Caco-2 (cell line): ENCODE measurements at regions of chr20 and their contacts with region 1.

Region 1: GRCh38 chr20:62524505-62524911 is 48.7 kb upstream of the GATA5 start:
- DNase-seq: no peak
- H3K4me3 ChIP-seq: no peak overlapping the region
- H3K4me3 Mint-ChIP-seq: no peak overlapping the region
- H3K27ac Mint-ChIP-seq: no peak overlapping the region
- H3K4me1 ChIP-seq: peaks cover 22% of the 10 kb centered on the region
- H3K4me1 Mint-ChIP-seq: peaks cover 13% of the 10 kb centered on the region
- H3K27me3 ChIP-seq: no peaks in the 10 kb centered on the region
- H3K27me3 Mint-ChIP-seq: no peaks in the 10 kb centered on the region
- CTCF ChIP-seq: no peak

Region 2: DNA sequence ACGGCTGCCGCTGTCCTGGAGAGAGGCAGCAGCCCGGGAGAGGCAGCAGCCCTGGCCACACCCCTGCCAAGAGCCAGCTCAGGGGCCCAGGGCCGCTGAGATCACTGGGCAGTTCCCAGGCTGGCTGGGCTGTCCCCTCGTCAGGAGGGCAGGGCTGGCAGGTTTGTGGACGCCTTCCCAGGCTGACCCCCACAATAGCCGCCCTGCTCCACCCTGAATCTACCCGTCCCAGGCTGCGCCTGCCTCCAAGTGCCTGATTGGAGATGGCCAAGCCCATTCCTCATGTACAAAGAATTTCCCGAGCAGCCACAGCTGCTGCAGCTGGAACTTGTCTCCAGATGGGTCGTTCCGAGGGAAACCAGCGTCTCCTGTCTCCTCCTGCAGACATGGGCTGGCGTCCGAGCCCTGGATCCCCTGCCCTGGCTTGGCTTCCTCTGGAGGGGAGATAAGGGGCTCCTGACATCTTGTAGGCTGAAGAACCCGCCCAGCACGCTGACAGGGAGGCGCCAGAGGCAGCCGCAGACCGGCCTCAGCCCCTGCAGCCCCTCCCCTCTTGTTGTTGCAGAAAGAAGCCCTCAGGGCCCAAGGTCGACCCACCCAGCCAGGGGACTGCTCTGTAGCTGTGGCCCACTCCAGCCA is 39.3 kb before region 1 on chr20:
- CTCF ChIA-PET with region 1: no interaction called
- POLR2A ChIA-PET with region 1: no interaction called
- intact Hi-C with region 1: no loop called
- DNase-seq: peak; percentile 72 to 89
- H3K4me3 ChIP-seq: no peak overlapping the region
- H3K4me3 Mint-ChIP-seq: peak overlapping the region; percentile 50
- H3K27ac Mint-ChIP-seq: peak overlapping the region; percentile 88
- H3K4me1 ChIP-seq: peaks cover 99% of the 10 kb centered on the region
- H3K4me1 Mint-ChIP-seq: peaks cover 70% of the 10 kb centered on the region
- H3K27me3 ChIP-seq: no peaks in the 10 kb centered on the region
- H3K27me3 Mint-ChIP-seq: no peaks in the 10 kb centered on the region
- CTCF ChIP-seq: peak in 1 of 2 experiments; percentile 0

Region 3: GRCh38 chr20:62500237-62500864 is 24.2 kb before region 1 on chr20:
- CTCF ChIA-PET with region 1: interaction called, 3 read pairs
- POLR2A ChIA-PET with region 1: no interaction called
- intact Hi-C with region 1: loop called (anchors 1 kb)
- DNase-seq: peak in 1 of 2 experiments; percentile 81
- H3K4me3 ChIP-seq: no peak overlapping the region
- H3K4me3 Mint-ChIP-seq: no peak overlapping the region
- H3K27ac Mint-ChIP-seq: no peak overlapping the region
- H3K4me1 ChIP-seq: peaks cover 17% of the 10 kb centered on the region
- H3K4me1 Mint-ChIP-seq: no peaks in the 10 kb centered on the region
- H3K27me3 ChIP-seq: no peaks in the 10 kb centered on the region
- H3K27me3 Mint-ChIP-seq: no peaks in the 10 kb centered on the region
- CTCF ChIP-seq: peak; percentile 81 to 89

Region 4: DNA sequence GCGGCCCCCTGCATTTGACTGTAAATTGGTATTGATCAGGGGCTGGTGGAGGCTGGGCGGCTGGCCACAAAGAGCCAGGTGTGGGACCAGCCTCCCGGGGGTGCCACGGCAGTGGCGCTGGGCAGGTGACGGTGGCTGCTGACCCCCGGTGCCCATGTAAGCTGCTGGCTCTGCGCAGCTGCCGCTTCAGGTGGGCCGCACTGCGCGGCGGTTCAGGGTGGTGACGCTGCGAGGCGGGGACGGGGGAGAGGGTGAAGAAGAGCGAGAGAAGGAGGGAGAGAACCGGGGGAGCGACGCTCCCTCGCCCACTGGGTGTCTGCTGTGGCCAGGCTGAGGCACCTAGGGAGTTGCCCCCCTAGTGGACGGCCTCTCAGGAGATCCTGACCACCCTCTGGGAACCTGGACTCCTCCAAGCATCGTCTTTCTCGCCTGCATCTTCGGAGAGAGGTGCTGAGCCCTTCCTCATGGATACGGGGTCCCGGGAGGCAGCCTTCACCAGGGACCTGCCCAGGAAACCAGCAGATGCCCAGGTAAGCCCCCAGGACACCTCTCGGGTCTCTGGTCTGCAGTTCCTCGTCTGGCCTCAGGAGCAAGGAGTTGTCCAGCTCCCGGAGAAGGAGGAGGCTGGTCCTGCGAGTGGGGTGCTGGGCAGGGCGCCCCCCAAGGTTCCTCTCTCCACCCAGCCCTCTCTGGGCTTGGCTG is 28.8 kb after region 1 on chr20:
- CTCF ChIA-PET with region 1: interaction called, 12 read pairs
- POLR2A ChIA-PET with region 1: no interaction called
- intact Hi-C with region 1: no loop called
- DNase-seq: no peak
- H3K4me3 ChIP-seq: no peak overlapping the region
- H3K4me3 Mint-ChIP-seq: no peak overlapping the region
- H3K27ac Mint-ChIP-seq: no peak overlapping the region
- H3K4me1 ChIP-seq: peaks cover 12% of the 10 kb centered on the region; the same call in 1 of the 2 replicates
- H3K4me1 Mint-ChIP-seq: peaks cover 7% of the 10 kb centered on the region
- H3K27me3 ChIP-seq: peaks cover 2% of the 10 kb centered on the region
- H3K27me3 Mint-ChIP-seq: peaks cover 11% of the 10 kb centered on the region
- CTCF ChIP-seq: peak in 1 of 2 experiments; percentile 19

Region 5: GRCh38 chr20:63381807-63382322 is 857.4 kb after region 1 on chr20:
- CTCF ChIA-PET with region 1: interaction called, 13 read pairs
- POLR2A ChIA-PET with region 1: no interaction called
- intact Hi-C with region 1: no loop called
- DNase-seq: peak in 1 of 2 experiments; percentile 80
- H3K4me3 ChIP-seq: no peak overlapping the region
- H3K4me3 Mint-ChIP-seq: no peak overlapping the region
- H3K27ac Mint-ChIP-seq: no peak overlapping the region
- H3K4me1 ChIP-seq: no peaks in the 10 kb centered on the region
- H3K4me1 Mint-ChIP-seq: peaks cover 6% of the 10 kb centered on the region
- H3K27me3 ChIP-seq: no peaks in the 10 kb centered on the region
- H3K27me3 Mint-ChIP-seq: peaks cover 12% of the 10 kb centered on the region
- CTCF ChIP-seq: peak; percentile 100